Activated T-helper 2 cell treated with anti-CD3 and anti-CD28 coated beads, Interferon-gamma antibody, Interleukin-2, Interleukin-4, amounts not matched to agents 10 μg/mL and 5 μg/mL and 100 μg/mL, durations not matched to agents 14 hours and 24 hours and 36 hours (primary cell): ENCODE measurements at regions of chr7 and their contacts with region 1.

Region 1: GRCh38 chr7:134750083-134751062 is 29.1 kb upstream of the CALD1 start:
- DNase-seq: peak; percentile 22
- H3K4me3 Mint-ChIP-seq: no peak overlapping the region
- H3K27ac Mint-ChIP-seq: peak overlapping the region; percentile 59
- H3K4me1 Mint-ChIP-seq: peaks cover 35% of the 10 kb centered on the region
- H3K27me3 Mint-ChIP-seq: no peaks in the 10 kb centered on the region

Region 2: DNA sequence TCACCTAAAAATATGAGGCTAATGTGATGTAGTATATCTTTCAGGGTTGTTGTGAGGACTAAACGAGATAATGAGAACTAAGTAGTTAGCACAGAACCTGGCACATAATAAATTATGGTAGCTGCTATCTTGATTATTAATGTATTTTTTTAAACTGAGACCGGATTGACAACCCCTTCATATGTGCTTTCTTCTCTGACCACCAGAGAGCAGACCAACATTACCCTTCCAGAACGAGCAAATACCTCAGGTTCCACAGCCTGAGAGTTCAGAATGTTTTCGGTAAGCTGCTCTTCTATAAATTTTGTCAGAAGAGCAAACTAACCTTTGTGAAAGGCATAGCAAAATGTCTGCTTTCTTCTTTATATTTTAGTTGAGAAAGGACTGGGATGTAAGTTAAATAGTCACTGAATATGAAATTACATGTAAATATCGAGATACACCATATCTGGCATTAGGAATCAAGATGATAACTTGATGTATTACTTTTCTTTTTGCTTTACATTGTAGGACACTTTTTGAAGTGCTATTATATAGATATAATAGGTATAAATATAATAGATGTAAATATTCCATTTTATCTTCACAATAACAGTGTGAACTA is 117.3 kb before region 1 on chr7:
- intact Hi-C with region 1: loop called (anchors 2 kb)
- DNase-seq: no peak
- H3K4me3 Mint-ChIP-seq: no peak overlapping the region
- H3K27ac Mint-ChIP-seq: no peak overlapping the region
- H3K4me1 Mint-ChIP-seq: peaks cover 25% of the 10 kb centered on the region
- H3K27me3 Mint-ChIP-seq: peaks cover 8% of the 10 kb centered on the region

Region 3: GRCh38 chr7:134690016-134690415 is 60.4 kb before region 1 on chr7:
- intact Hi-C with region 1: loop called (anchors 2 kb)
- DNase-seq: no peak
- H3K4me3 Mint-ChIP-seq: no peak overlapping the region
- H3K27ac Mint-ChIP-seq: peak overlapping the region; percentile 36
- H3K4me1 Mint-ChIP-seq: peaks cover 25% of the 10 kb centered on the region
- H3K27me3 Mint-ChIP-seq: no peaks in the 10 kb centered on the region

Region 4: GRCh38 chr7:134710859-134711624 is 39.3 kb before region 1 on chr7:
- intact Hi-C with region 1: loop called (anchors 2 kb)
- DNase-seq: peak; percentile 49
- H3K4me3 Mint-ChIP-seq: peak overlapping the region; percentile 77
- H3K27ac Mint-ChIP-seq: peak overlapping the region; percentile 87
- H3K4me1 Mint-ChIP-seq: peaks cover 33% of the 10 kb centered on the region
- H3K27me3 Mint-ChIP-seq: no peaks in the 10 kb centered on the region

Region 5: GRCh38 chr7:134737566-134738345 is 12.6 kb before region 1 on chr7:
- intact Hi-C with region 1: loop called (anchors 1 kb)
- DNase-seq: peak; percentile 28
- H3K4me3 Mint-ChIP-seq: no peak overlapping the region
- H3K27ac Mint-ChIP-seq: peak overlapping the region; percentile 90
- H3K4me1 Mint-ChIP-seq: peaks cover 55% of the 10 kb centered on the region
- H3K27me3 Mint-ChIP-seq: no peaks in the 10 kb centered on the region

Region 6: GRCh38 chr7:134854816-134855215 is 104.4 kb after region 1 on chr7:
- intact Hi-C with region 1: loop called (anchors 5 kb)
- DNase-seq: no peak
- H3K4me3 Mint-ChIP-seq: no peak overlapping the region
- H3K27ac Mint-ChIP-seq: peak overlapping the region; percentile 22
- H3K4me1 Mint-ChIP-seq: peaks cover 31% of the 10 kb centered on the region
- H3K27me3 Mint-ChIP-seq: no peaks in the 10 kb centered on the region

Region 7: GRCh38 chr7:134946260-134946659 is 195.9 kb after region 1 on chr7:
- intact Hi-C with region 1: loop called (anchors 5 kb)
- DNase-seq: no peak
- H3K4me3 Mint-ChIP-seq: no peak overlapping the region
- H3K27ac Mint-ChIP-seq: no peak overlapping the region
- H3K4me1 Mint-ChIP-seq: peaks cover 11% of the 10 kb centered on the region
- H3K27me3 Mint-ChIP-seq: no peaks in the 10 kb centered on the region